GM13977 (cell line): ENCODE measurements at regions of chr12 and their contacts with region 1.

Region 1: DNA sequence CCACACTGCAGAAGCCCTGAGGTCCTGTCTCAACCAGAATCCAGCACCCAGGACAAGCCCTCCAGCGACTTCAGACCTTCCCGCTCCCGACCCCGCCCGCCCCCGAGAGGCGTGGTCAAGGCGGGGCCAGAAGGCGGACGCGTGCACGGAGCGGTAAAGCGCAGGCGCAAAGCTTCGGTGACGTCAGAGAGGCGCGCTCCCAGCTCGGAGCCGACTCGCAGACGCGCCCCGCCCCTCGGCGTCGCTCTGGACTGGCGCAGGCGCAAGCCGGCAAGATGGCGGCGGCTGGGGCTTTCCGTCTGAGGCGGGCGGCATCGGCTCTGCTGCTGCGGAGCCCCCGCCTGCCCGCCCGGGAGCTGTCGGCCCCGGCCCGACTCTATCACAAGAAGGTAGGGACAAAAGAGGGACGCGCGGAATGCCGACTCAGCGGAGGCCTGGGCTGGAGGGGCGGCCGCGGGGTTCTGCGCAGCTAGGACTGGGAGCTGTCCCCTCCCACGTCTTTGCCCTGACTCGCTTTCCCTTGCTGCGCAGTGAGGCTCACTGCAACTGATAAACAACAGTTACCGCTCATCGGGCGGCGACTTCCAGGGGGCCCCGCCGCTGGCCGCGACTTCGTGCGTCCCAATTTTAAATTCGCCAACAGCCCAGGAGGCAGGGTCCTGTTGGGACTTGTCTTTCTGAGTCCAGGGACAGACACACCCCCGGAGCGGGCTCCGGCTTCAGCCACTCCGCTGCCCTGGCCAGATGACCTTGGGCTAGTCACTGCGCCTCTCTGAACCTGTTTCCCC is at the start of gene ISCU:
- DNase-seq: peak; percentile 96
- CTCF ChIP-seq: no peak

Region 2: DNA sequence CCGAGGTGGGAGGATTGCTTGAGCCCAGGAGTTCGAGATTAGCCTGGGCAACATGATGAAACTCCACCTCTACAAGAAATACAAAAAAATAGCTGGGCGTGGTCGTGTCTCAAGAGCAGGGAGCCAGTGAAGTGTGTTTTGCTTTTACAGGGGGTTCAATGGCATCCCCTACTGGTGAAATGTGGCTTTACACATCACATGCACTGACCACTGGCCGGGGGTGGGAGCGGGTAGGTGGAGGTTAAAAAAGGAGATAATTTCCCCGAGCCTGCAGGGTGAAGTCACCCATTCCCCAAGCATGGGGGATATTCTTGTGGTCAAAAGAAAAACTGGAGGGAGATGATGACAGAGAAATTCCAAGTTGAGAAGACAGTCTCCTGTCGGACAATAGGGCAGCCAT is 940.5 kb before region 1 on chr12:
- in situ Hi-C with region 1: no loop called
- DNase-seq: peak; percentile 28
- CTCF ChIP-seq: peak; percentile 63

Region 3: DNA sequence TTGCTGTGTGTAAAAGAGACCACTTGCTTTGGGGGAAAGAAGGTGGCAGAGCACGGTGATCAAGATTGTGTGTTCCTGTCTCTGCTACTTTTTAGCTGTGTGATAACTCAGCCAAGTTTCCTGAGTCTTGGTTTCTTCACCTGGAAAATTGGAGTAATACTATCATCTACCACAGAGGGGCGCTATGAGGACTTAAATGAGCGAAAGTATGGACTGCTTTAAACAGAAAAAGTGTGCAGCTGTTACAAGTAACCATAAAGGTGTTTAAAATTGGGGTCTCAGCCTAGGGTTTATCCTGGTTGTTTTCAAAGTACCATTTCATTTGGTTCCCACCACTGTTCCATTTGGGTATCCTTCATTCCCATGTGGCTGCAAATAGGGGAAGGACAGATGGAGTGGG is 499.4 kb before region 1 on chr12:
- in situ Hi-C with region 1: no loop called
- DNase-seq: no peak
- CTCF ChIP-seq: peak; percentile 52

Region 4: DNA sequence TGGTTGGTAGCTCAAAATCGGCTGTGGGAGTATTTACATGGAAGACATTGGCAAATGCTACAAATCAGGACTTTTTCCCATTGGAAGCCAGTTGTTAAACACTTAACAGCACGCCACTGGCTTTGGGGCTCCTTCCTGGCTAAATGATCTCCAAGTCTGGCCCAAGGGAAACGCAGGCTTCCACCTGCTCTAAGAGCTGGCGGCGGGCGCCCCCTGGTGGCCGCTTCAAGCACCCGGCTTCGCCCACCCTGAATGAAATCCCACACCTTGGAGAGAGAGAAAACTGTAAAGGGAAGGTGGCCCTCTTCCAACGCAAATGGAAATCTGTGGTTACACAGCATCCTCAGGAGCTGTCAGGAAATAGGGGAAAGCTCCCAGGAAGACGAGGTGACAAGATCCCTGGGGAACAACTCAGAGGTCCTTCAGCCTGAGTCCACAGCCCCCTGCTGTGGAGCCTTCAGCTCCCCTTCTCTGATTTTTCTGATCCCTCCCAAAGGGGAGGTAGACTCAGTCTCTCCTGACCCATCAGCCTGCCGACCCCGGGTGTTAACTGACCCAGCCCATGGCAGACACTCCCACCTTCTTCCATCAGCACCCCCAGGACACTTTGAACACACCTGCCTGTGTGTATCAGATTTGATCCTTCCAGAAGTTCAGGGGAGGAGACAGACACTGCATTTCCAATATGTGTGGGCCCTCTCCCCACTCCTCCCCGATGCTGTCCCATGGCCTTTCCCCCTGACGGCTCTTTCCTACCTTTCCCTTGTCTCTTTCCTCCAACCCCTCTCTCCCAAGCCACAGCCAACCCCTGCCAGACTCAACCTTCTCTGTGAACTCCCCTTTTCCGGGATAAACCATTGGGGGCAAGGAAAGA is 55.8 kb after region 1 on chr12:
- in situ Hi-C with region 1: loop called (anchors 5 kb)
- DNase-seq: peak; percentile 74
- CTCF ChIP-seq: peak; percentile 91